ENCODE measurements at regions of chr15 and their contacts with region 1.

Region 1: DNA sequence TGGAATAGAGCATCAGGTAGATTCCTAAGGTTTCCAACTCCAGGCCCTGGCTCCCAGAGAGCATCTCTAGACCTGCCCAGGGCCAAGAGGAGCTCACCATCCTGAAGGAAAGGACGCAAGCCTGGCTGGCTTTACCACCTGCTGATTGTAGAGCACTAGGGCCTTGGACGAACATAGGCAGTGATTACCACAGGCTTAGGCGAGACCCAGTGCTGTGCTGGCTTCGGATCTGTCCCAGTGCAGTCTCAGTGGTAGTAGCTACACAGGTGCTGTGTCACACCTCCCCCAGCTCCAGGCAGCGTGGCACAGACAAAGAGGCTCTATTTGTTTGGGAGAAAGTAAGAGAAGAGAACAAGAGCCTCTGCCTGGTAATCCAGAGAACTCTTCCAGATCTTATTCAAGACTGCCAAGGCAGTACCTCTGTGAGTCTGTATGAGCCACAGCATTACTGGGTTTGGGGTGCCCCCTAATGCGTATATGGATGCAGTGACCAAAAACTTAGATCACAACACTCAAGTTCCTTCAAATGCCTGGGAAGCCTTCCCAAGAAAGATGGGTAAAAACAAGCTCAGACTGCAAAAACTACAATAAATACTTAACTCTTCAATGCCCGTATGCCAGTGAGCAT is 25.4 kb downstream of the ISG20 start:
- DNase-seq: no peak
- ATAC-seq: peak; percentile 57
- H3K4me3 ChIP-seq: no peak overlapping the region
- H3K27ac ChIP-seq: no peak overlapping the region
- H3K4me1 ChIP-seq: no peaks in the 10 kb centered on the region
- H3K27me3 ChIP-seq: peaks cover 2% of the 10 kb centered on the region in 2 experiments; a peak in 2 of 5 replicates
- CTCF ChIP-seq: peak; percentile 55
- EP300 ChIP-seq: no peak
- POLR2A ChIP-seq: no peak
- RAD21 ChIP-seq: no peak

Region 2: DNA sequence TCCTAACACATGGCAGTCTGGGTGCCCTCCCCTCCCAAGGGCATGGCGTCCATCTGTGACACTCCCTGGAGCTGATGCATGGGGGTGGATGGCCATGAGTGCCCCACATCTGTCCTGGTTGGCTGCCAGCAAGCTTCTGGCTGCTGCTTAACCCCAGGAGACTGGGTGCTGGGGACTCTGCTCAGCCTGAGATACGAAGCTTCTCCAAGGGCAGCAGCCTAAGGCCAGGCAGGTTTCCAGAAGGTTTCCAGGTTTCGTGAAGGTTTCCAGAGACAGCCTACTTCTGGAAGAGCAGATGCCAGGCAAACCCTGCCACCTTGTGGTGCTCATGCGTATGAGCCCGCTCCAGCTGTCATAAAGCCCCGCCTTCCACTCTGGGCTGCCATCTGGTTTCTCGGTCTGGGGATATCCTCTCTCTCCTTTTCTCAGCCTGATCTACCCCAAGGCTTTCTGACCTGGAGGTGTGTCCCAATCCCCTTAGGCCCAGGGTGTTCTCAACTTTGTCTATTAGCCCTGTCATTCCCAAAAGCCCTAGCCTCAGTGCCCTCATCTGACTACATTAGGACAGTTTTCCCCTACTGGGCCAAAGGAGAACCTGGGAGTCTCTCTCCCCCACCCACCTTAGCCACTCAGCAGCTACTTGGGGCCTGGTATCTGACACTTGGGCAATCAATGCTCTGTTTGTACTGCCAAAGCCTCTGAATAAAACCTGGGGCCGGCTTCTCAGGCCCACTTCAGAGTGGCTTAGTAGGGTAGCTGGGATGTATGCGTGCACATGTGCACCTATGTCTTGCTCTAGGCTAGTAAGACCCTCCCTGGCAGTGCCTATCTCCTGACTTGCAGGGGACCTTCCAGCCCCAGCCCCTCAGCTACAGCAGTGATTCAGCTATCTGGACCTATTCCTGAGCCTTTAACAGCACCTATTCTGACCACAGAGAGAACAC is 209.1 kb before region 1 on chr15:
- CTCF ChIA-PET with region 1: no interaction called
- POLR2A ChIA-PET with region 1: no interaction called
- in situ Hi-C with region 1: no loop called
- intact Hi-C with region 1: no loop called
- DNase-seq: peak; percentile 48
- ATAC-seq: peak; percentile 91
- H3K4me3 ChIP-seq: no peak overlapping the region
- H3K27ac ChIP-seq: no peak overlapping the region
- H3K4me1 ChIP-seq: peaks cover 12% of the 10 kb centered on the region; the same call in 1 of the 2 replicates
- H3K27me3 ChIP-seq: no peaks in the 10 kb centered on the region
- CTCF ChIP-seq: peak; percentile 78
- EP300 ChIP-seq: no peak
- POLR2A ChIP-seq: peak in 1 of 2 experiments; percentile 30; a peak in 1 of 4 replicates
- RAD21 ChIP-seq: peak; percentile 56; the same call in 1 of the 2 replicates

Region 3: GRCh38 chr15:88546248-88547129 is 117.8 kb before region 1 on chr15 and contains the start of gene DET1:
- CTCF ChIA-PET with region 1: no interaction called
- POLR2A ChIA-PET with region 1: no interaction called
- in situ Hi-C with region 1: no loop called
- intact Hi-C with region 1: no loop called
- DNase-seq: peak; percentile 92
- ATAC-seq: peak; percentile 100
- H3K4me3 ChIP-seq: peak within 1 kb of the TSS; percentile 69 to 85 (median 76); a peak in 5 of 6 replicates
- H3K27ac ChIP-seq: peak within 1 kb of the TSS; percentile 51
- H3K4me1 ChIP-seq: no peaks in the 10 kb centered on the region
- H3K27me3 ChIP-seq: no peaks in the 10 kb centered on the region
- CTCF ChIP-seq: peak; percentile 93
- EP300 ChIP-seq: no peak; a peak in 1 of 4 replicates
- POLR2A ChIP-seq: peak in 1 of 2 experiments; percentile 24; a peak in 1 of 4 replicates
- RAD21 ChIP-seq: peak; percentile 32; the same call in 1 of the 2 replicates
- total RNA-seq, gene DET1: 2.1 and 2.2 TPM in 2 replicates

Region 4: GRCh38 chr15:88695691-88696251 is 31.5 kb after region 1 on chr15:
- CTCF ChIA-PET with region 1: no interaction called
- POLR2A ChIA-PET with region 1: no interaction called
- in situ Hi-C with region 1: loop called (anchors 5 kb)
- intact Hi-C with region 1: no loop called
- DNase-seq: no peak
- ATAC-seq: no peak
- H3K4me3 ChIP-seq: no peak overlapping the region
- H3K27ac ChIP-seq: no peak overlapping the region
- H3K4me1 ChIP-seq: no peaks in the 10 kb centered on the region
- H3K27me3 ChIP-seq: peaks cover 0 to 39% of the 10 kb centered on the region in 2 experiments; a peak in 3 of 5 replicates
- CTCF ChIP-seq: 0 out of 2 replicates have a peak, but pooled peaks have one; percentile 6
- EP300 ChIP-seq: no peak
- POLR2A ChIP-seq: no peak
- RAD21 ChIP-seq: no peak

Measured in HepG2 (cell line).